Cardiac septum (tissue), 1 donor: ENCODE measurements at regions of chr18 and their contacts with region 1.

Region 1: DNA sequence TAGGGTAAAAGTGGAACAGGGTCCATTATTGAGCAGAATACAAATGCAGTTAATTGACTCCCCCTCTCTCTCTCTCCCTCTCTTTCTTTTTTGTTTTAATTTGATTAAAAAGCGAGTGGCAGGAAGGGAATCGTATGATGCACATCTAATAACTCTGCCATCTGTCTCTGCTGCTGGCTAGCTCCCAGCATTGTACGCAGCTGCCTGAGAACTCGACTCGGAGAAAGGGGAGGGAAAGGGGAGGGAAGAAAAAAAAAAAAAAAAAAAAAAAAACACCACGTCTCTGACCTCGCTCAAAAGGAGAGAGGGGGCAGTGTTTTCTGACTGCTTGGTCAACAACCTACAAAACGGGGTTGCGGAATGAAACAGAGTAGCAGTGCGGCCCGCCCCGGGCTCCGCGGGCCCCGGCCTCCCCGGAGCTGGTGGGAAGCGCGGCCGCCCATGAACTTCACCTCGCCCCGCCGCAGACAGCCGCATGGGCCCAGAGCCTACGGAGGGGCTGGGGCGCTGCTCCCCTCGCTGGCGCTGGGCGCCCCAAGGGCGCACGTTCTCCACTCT is 265.7 kb downstream of the TCF4 start:
- DNase-seq: peak; percentile 82

Region 2: DNA sequence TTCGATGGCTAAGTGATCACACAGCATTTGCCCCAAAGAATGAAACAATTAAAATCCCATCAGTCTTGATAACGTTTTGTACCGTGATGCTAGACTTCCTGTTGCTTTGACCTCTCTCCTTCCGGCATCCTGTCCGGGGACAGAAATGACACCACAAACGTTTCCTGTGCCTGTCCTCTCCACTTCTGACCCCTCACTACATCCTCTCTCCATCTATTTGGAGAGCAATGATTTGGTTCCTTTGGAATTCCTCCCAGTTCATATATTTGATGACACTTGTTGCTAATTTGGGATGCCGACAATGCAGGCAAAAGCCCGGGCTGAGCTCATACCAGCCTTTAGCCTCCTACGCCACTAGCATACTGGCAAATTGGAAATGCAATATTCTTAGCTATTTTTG is 211.8 kb before region 1 on chr18:
- intact Hi-C with region 1: loop called (anchors 10 kb)
- DNase-seq: no peak

Region 3: DNA sequence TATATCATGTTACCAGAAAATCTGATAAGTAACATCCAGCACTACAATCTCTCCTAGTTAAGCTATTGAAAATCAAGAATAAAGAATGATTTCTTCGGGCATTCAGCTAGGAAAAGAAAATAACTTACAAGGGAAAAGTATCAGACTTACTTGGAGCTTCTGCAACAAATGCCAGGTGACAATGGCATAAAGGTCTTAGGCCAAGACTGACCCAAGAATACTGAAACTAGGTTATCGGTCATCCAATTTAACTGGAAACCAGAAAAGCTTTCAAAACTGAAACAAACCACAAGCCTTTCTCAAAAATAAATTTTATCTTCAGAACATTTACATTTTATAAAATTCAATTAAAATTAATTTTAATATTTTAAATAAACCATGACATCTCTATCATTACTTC is 149.0 kb before region 1 on chr18:
- intact Hi-C with region 1: no loop called
- DNase-seq: no peak

Region 4: GRCh38 chr18:55243857-55244256 is 78.4 kb before region 1 on chr18:
- intact Hi-C with region 1: loop called (anchors 5 kb)
- DNase-seq: no peak

Region 5: DNA sequence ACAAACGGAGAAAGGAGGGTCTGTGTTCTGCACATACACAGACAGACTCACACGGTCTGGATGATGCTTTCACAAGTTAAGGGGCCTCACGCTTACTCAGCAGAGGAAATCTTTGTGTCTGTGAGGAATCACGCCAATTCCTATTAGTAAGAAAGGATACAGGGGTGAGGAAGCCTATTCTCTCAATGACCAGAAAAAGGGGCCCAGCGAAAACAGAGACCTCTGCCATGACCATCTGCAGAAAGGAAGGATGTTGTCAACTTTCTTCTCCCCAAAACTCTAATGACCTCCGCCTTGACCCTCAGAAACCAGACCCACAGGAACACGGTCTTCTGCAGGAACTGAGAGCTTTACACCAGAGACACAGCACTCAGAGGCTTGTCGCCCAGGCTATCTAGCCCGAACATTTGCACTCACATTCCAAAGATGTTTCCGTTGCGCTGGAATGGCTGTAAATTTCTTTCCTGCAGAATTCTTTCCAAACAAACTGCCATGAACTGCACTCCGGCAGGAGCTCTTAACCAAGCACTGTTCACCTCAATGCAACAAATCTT is 79.5 kb after region 1 on chr18:
- intact Hi-C with region 1: loop called (anchors 5 kb)
- DNase-seq: no peak

Region 6: DNA sequence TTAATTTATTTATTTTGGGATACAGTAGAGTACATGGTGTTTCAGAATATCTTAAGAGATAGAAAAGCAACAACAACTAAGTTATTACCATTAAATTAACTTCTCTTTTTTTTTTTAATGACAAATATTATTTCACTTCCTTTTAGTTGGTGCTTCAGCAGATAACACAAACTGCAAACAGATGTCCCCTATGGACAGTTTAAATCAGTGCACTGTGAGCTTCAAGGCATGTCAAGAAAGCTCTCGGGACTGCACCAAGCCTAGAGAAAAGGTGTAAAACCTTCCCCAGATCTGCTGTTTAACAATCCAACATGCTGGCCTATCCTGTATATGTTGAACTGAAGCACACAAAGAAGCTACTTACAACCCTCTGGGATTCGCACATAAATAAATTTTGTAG is 143.1 kb after region 1 on chr18:
- intact Hi-C with region 1: no loop called
- DNase-seq: no peak

Region 7: GRCh38 chr18:55509631-55510324 is 187.5 kb after region 1 on chr18:
- intact Hi-C with region 1: loop called (anchors 10 kb)
- DNase-seq: no peak